ENCODE measurements at regions of chr14 and their contacts with region 1.

Region 1: GRCh38 chr14:100375963-100376735 is 53.0 kb downstream of the SLC25A47 start:
- DNase-seq: peak; percentile 96 to 97
- ATAC-seq: peak; percentile 96 to 97 (median 96)
- H3K4me3 ChIP-seq: peak within 1 kb of the TSS; percentile 89
- H3K27ac ChIP-seq: peak within 1 kb of the TSS; percentile 95
- H3K4me1 ChIP-seq: peaks cover 19% of the 10 kb centered on the region
- H3K27me3 ChIP-seq: no peaks in the 10 kb centered on the region
- CTCF ChIP-seq: no peak

Region 2: GRCh38 chr14:99971087-99971940 is 404.8 kb before region 1 on chr14:
- intact Hi-C with region 1: loop called in 1 of 2 experiments (anchors 5 kb)
- DNase-seq: peak; percentile 84 to 85
- ATAC-seq: peak; percentile 94 to 95 (median 94)
- H3K4me3 ChIP-seq: peak overlapping the region; percentile 88
- H3K27ac ChIP-seq: peak overlapping the region; percentile 69
- H3K4me1 ChIP-seq: no peaks in the 10 kb centered on the region
- H3K27me3 ChIP-seq: no peaks in the 10 kb centered on the region
- CTCF ChIP-seq: no peak

Region 3: GRCh38 chr14:100239840-100240724 is 136.1 kb before region 1 on chr14:
- intact Hi-C with region 1: loop called (anchors 2 to 5 kb)
- DNase-seq: peak; percentile 91 to 96
- ATAC-seq: peak; percentile 75 to 81 (median 80)
- H3K4me3 ChIP-seq: peak overlapping the region; percentile 99
- H3K27ac ChIP-seq: peak overlapping the region; percentile 100
- H3K4me1 ChIP-seq: peaks cover 53% of the 10 kb centered on the region
- H3K27me3 ChIP-seq: no peaks in the 10 kb centered on the region
- CTCF ChIP-seq: peak; percentile 75

Region 4: GRCh38 chr14:100285021-100285912 is 90.9 kb before region 1 on chr14:
- intact Hi-C with region 1: loop called in 1 of 2 experiments (anchors 5 kb)
- DNase-seq: peak; percentile 75 to 86
- ATAC-seq: peak; percentile 83 to 86 (median 84)
- H3K4me3 ChIP-seq: peak overlapping the region; percentile 88
- H3K27ac ChIP-seq: peak overlapping the region; percentile 93
- H3K4me1 ChIP-seq: peaks cover 47% of the 10 kb centered on the region
- H3K27me3 ChIP-seq: no peaks in the 10 kb centered on the region
- CTCF ChIP-seq: peak; percentile 67

Region 5: DNA sequence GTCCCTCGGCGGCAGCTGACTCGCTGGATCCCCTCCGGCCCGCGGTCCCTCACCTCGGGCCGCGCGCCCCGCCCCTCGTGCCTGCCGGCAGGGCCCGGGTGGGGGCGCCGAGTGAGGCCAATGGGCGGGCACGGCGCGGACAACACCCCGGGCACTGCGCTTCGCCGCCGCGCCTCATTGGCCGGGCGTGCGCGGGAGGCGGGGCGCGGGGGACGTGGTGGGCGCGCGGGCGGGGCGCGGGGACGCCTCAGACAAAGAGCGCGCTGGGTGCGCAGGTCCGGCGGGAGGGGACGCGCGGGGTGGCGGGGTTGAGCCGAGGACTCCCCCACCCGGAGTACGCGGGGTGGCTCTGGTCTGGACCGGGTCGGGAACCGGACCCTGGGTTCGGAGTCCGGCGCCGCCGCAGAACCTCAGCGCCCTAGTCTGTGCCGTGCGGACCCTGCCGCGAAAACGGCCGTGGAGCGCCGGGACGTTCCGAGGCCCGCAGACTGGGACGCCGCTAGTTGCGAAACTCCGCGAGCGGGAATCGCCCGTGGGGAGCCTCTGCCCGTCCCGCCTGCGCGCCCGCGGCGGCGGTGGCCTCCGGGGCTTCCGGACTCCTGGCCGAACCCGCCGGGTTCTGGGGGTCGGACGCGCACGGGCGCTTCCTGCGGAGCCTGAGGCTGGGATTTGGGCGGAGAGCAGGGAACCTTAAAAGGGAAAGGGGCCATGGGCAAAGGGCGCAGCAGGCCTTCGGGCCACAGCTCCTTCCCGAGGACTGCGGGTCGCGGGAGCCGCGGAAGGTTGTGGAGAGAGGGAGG is 69.5 kb before region 1 on chr14 and contains the start of gene SLC25A29:
- intact Hi-C with region 1: loop called in 1 of 2 experiments (anchors 5 kb)
- DNase-seq: peak; percentile 93 to 94
- ATAC-seq: peak; percentile 93 to 95 (median 94)
- H3K4me3 ChIP-seq: peak within 1 kb of the TSS; percentile 95
- H3K27ac ChIP-seq: peak within 1 kb of the TSS; percentile 82
- H3K4me1 ChIP-seq: peaks cover 24% of the 10 kb centered on the region
- H3K27me3 ChIP-seq: no peaks in the 10 kb centered on the region
- CTCF ChIP-seq: no peak
- total RNA-seq, gene SLC25A29: 5.0 to 14.8 (median 7.5) TPM